Activated T-helper 2 cell treated with anti-CD3 and anti-CD28 coated beads, Interferon-gamma antibody, Interleukin-2, Interleukin-4, amounts not matched to agents 10 μg/mL and 5 μg/mL and 100 μg/mL, durations not matched to agents 14 hours and 24 hours and 36 hours (primary cell): ENCODE measurements at regions of chr7 and their contacts with region 1.

Region 1: GRCh38 chr7:106425017-106425719 is 140.4 kb upstream of the NAMPT start:
- DNase-seq: peak; percentile 44
- H3K4me3 Mint-ChIP-seq: peak overlapping the region; percentile 65
- H3K27ac Mint-ChIP-seq: peak overlapping the region; percentile 98
- H3K4me1 Mint-ChIP-seq: peaks cover 75% of the 10 kb centered on the region
- H3K27me3 Mint-ChIP-seq: no peaks in the 10 kb centered on the region

Region 2: GRCh38 chr7:106279425-106280197 is 145.6 kb before region 1 on chr7:
- intact Hi-C with region 1: loop called (anchors 1 kb)
- DNase-seq: no peak
- H3K4me3 Mint-ChIP-seq: peak overlapping the region; percentile 78
- H3K27ac Mint-ChIP-seq: peak overlapping the region; percentile 92
- H3K4me1 Mint-ChIP-seq: peaks cover 60% of the 10 kb centered on the region
- H3K27me3 Mint-ChIP-seq: no peaks in the 10 kb centered on the region

Region 3: GRCh38 chr7:106405697-106406141 is 19.4 kb before region 1 on chr7:
- intact Hi-C with region 1: loop called (anchors 1 kb)
- DNase-seq: no peak
- H3K4me3 Mint-ChIP-seq: no peak overlapping the region
- H3K27ac Mint-ChIP-seq: peak overlapping the region; percentile 67
- H3K4me1 Mint-ChIP-seq: peaks cover 28% of the 10 kb centered on the region
- H3K27me3 Mint-ChIP-seq: peaks cover 4% of the 10 kb centered on the region

Region 4: GRCh38 chr7:106461993-106462859 is 37.1 kb after region 1 on chr7:
- intact Hi-C with region 1: loop called (anchors 2 kb)
- DNase-seq: no peak
- H3K4me3 Mint-ChIP-seq: no peak overlapping the region
- H3K27ac Mint-ChIP-seq: no peak overlapping the region
- H3K4me1 Mint-ChIP-seq: peaks cover 16% of the 10 kb centered on the region
- H3K27me3 Mint-ChIP-seq: no peaks in the 10 kb centered on the region

Region 5: DNA sequence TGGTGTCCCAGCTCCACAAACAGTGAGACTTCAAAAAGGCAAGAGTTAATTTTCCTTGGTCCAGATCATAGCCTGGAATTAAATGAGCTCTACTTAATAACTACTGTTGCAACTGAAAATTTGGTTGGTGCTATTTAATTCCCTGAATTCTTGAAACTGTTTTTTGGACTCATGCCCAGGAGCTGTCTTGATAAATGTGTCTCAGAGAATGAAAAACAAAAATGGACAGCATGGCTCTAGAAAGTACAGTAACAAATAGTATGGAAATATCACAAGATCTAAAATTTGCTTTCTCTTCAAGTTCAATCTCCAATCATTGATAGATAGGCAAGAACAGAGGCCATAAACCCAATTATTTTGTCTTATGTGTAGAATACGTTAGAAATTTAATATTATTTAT is 193.3 kb after region 1 on chr7:
- intact Hi-C with region 1: no loop called
- DNase-seq: no peak
- H3K4me3 Mint-ChIP-seq: no peak overlapping the region
- H3K27ac Mint-ChIP-seq: no peak overlapping the region
- H3K4me1 Mint-ChIP-seq: peaks cover 4% of the 10 kb centered on the region
- H3K27me3 Mint-ChIP-seq: peaks cover 4% of the 10 kb centered on the region

Region 6: GRCh38 chr7:106774768-106775551 is 349.8 kb after region 1 on chr7:
- intact Hi-C with region 1: loop called (anchors 5 kb)
- DNase-seq: no peak
- H3K4me3 Mint-ChIP-seq: no peak overlapping the region
- H3K27ac Mint-ChIP-seq: peak overlapping the region; percentile 14
- H3K4me1 Mint-ChIP-seq: peaks cover 36% of the 10 kb centered on the region
- H3K27me3 Mint-ChIP-seq: no peaks in the 10 kb centered on the region